Esophagus muscularis mucosa (tissue), 4 donors: ENCODE measurements at regions of chr2 and their contacts with region 1.

Region 1: DNA sequence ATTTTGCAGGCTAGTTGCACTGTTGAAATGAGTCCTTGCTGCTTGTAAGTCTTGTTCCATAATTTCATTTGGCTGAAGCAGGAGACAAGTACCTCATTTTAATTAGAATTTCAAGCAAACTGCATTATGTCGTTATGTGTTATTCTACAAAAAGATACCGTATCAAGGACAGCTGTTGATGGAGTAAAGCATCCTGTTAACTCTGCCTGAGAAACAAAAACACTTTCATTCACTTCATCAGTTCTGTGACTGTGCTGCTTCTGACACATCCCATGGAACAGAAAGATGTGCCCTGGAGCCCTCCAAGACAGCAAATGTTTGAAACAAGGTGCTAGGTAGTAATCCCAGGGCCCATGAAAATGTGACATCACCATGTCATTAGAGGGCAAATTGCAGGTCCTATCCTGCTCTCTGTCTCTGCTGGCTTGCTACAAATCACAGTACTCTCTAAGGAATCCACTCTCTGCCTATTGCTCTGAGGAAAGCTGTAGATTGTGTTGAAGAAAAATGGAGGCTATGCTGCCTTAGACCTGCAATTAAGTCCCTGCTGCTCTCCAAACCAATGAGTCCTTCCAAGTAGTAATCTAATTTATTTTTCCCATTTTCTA is 209.7 kb upstream of the PARD3B start:
- DNase-seq: no peak
- H3K4me3 ChIP-seq: no peak overlapping the region
- H3K27ac ChIP-seq: no peak overlapping the region
- H3K4me1 ChIP-seq: peaks cover 0 to 9% (median 0%) of the 10 kb centered on the region in 4 donors
- H3K27me3 ChIP-seq: no peaks in the 10 kb centered on the region
- CTCF ChIP-seq: no peak
- EP300 ChIP-seq: no peak
- POLR2A ChIP-seq: no peak

Region 2: GRCh38 chr2:204686406-204686805 is 350.9 kb after region 1 on chr2:
- intact Hi-C with region 1: loop called (anchors 2 kb)
- DNase-seq: no peak
- H3K4me3 ChIP-seq: no peak overlapping the region
- H3K27ac ChIP-seq: no peak overlapping the region
- H3K4me1 ChIP-seq: peaks cover 3 to 46% (median 31%) of the 10 kb centered on the region in 4 donors
- H3K27me3 ChIP-seq: no peaks in the 10 kb centered on the region
- CTCF ChIP-seq: no peak
- EP300 ChIP-seq: no peak
- POLR2A ChIP-seq: no peak

Region 3: GRCh38 chr2:205957452-205958154 is 1622.0 kb after region 1 on chr2:
- intact Hi-C with region 1: loop called (anchors 10 kb)
- DNase-seq: no peak
- H3K4me3 ChIP-seq: no peak overlapping the region
- H3K27ac ChIP-seq: no peak overlapping the region
- H3K4me1 ChIP-seq: no peaks in the 10 kb centered on the region
- H3K27me3 ChIP-seq: no peaks in the 10 kb centered on the region
- CTCF ChIP-seq: no peak
- EP300 ChIP-seq: no peak
- POLR2A ChIP-seq: no peak